ENCODE measurements at regions of chr15 and their contacts with region 1.

Region 1: DNA sequence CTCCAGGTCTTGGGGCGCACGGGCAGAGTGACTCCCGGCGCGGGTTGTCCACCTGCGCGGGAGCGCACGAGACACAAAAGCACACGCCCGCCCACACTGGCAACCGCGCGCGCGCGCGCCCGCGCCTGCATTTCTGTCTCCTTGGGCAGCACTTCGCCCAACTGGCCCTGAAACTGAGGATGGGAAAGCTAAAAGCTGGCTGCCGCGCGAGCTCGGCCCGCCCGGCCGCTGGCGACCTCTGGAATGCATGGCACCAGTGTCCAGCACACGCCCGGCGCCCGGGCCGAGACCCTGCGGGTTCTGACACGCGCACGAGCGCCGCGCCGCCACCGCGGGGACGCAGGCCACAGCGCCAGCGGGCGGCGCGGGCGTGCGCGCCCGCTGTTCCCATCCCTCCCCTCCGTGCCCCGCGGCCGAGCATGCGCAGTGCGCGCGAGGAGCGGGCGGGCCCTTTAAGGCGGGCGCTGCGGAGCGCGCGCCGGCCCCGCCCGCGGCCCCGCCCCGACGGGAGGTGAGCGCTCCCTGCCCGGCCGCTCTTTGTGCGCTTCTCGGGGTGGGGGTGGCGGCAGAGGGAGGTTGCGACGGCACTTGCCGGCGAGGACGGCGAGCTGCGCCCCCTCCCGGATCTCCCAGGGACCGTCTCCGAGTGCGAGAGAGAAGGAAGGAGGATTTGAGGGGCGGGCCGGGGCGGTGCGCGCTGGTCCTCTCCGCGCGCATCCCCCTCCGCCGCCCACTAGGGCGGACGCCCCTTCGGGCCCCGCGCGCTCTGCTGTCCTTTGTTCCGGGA is 1.0 kb upstream of the MEX3B start:
- DNase-seq: peak; percentile 85 to 93 (median 91)
- ATAC-seq: peak; percentile 86
- H3K4me3 ChIP-seq: peak overlapping the region; percentile 93
- H3K4me3 Mint-ChIP-seq: peak overlapping the region; percentile 88 to 94 (median 91)
- H3K27ac ChIP-seq: peak overlapping the region; percentile 72
- H3K27ac Mint-ChIP-seq: peak overlapping the region in 8 of 9 donors; percentile 31 to 93 (median 82)
- H3K4me1 ChIP-seq: peaks cover 0 to 8% of the 10 kb centered on the region in 2 donors
- H3K4me1 Mint-ChIP-seq: peaks cover 4 to 21% (median 11%) of the 10 kb centered on the region in 7 donors
- H3K27me3 ChIP-seq: no peaks in the 10 kb centered on the region
- H3K27me3 Mint-ChIP-seq: peaks cover 8 to 45% (median 11%) of the 10 kb centered on the region in 5 donors

Region 2: DNA sequence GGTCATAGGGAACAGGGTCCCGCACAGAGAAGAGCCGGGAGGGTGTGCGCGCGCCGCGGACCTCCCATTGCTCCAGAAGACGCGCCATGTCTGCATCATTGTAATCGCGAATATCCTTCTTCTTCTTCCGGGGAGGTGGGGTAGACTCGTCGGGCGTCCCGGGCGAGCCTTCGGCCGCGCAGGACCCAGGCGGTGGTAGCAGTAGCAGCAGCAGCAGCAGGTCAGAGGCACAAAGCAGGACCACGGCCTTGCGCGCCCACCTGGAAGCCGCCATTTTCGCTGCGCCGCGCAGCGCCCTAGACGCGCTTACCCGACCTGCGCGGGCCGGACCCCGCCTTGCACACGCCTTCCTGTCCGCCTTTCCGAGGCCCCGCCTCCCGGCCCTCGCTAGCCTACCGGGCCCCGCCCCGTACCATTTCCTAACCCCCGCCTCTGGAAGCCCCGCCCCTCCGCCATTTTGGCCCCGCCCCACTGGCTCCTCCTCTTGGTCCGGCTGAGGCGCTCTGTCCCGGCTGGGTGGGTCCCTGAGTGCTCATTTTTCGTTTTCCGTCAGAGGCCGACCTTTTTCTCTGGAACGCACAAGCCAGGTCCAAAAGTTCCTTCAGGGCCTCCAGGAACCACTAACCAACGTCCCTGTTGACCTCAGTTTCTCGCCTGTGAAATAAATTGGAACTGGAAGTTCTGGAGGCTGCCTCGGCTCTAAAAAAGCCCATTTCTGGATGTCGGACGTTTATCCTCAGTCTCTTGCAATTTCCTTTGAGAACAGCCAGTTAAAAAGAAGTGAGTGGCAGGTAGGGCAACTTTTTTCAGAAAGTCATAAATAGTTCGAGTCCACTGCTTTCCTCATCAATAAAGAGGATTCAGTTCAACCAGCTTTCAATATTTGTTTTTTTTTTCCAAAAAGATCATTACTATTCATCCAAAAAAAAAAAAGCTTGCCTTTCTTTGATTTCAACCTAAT is 1057.1 kb before region 1 on chr15 and contains the start of gene MESD:
- CTCF ChIA-PET with region 1: no interaction called
- POLR2A ChIA-PET with region 1: no interaction called
- intact Hi-C with region 1: loop called in 1 of 2 experiments (anchors 5 kb)
- DNase-seq: peak; percentile 89 to 97 (median 93)
- ATAC-seq: peak; percentile 99
- H3K4me3 ChIP-seq: peak within 1 kb of the TSS; percentile 95
- H3K4me3 Mint-ChIP-seq: peak within 1 kb of the TSS; percentile 95 to 100 (median 98)
- H3K27ac ChIP-seq: peak within 1 kb of the TSS; percentile 90
- H3K27ac Mint-ChIP-seq: peak within 1 kb of the TSS; percentile 92 to 99 (median 99)
- H3K4me1 ChIP-seq: peaks cover 28 to 45% of the 10 kb centered on the region in 2 donors
- H3K4me1 Mint-ChIP-seq: peaks cover 37 to 68% (median 64%) of the 10 kb centered on the region in 7 donors
- H3K27me3 ChIP-seq: no peaks in the 10 kb centered on the region
- H3K27me3 Mint-ChIP-seq: no peaks in the 10 kb centered on the region
- total RNA-seq, gene MESD: 17.1 to 42.5 (median 38.3) TPM

Region 3: GRCh38 chr15:81296673-81297072 is 750.2 kb before region 1 on chr15:
- CTCF ChIA-PET with region 1: no interaction called
- POLR2A ChIA-PET with region 1: no interaction called
- intact Hi-C with region 1: loop called (anchors 5 to 10 kb)
- DNase-seq: peak; percentile 38 to 87 (median 81)
- ATAC-seq: peak; percentile 69
- H3K4me3 ChIP-seq: peak overlapping the region; percentile 74
- H3K4me3 Mint-ChIP-seq: peak overlapping the region; percentile 80 to 100 (median 98)
- H3K27ac ChIP-seq: peak overlapping the region; percentile 87
- H3K27ac Mint-ChIP-seq: peak overlapping the region; percentile 93 to 100 (median 96)
- H3K4me1 ChIP-seq: peaks cover 52 to 59% of the 10 kb centered on the region in 2 donors
- H3K4me1 Mint-ChIP-seq: peaks cover 34 to 66% (median 64%) of the 10 kb centered on the region in 7 donors
- H3K27me3 ChIP-seq: no peaks in the 10 kb centered on the region
- H3K27me3 Mint-ChIP-seq: no peaks in the 10 kb centered on the region

Region 4: GRCh38 chr15:81410318-81410753 is 636.5 kb before region 1 on chr15:
- CTCF ChIA-PET with region 1: no interaction called
- POLR2A ChIA-PET with region 1: no interaction called
- intact Hi-C with region 1: loop called in 1 of 2 experiments (anchors 2 kb)
- DNase-seq: peak in 7 of 9 donors; percentile 37 to 77 (median 69)
- ATAC-seq: peak; percentile 80
- H3K4me3 ChIP-seq: no peak overlapping the region
- H3K4me3 Mint-ChIP-seq: peak overlapping the region in 1 of 10 donors; percentile 35
- H3K27ac ChIP-seq: no peak overlapping the region
- H3K27ac Mint-ChIP-seq: peak overlapping the region in 5 of 9 donors; percentile 13 to 86 (median 38)
- H3K4me1 ChIP-seq: peaks cover 0 to 4% of the 10 kb centered on the region in 2 donors
- H3K4me1 Mint-ChIP-seq: peaks cover 10 to 21% (median 17%) of the 10 kb centered on the region in 7 donors
- H3K27me3 ChIP-seq: peaks cover 0 to 3% of the 10 kb centered on the region in 2 donors
- H3K27me3 Mint-ChIP-seq: peaks cover 0 to 36% (median 7%) of the 10 kb centered on the region in 5 donors

Region 5: GRCh38 chr15:81548365-81549120 is 498.3 kb before region 1 on chr15:
- CTCF ChIA-PET with region 1: no interaction called
- POLR2A ChIA-PET with region 1: no interaction called
- intact Hi-C with region 1: no loop called
- DNase-seq: no peak
- ATAC-seq: no peak
- H3K4me3 ChIP-seq: no peak overlapping the region
- H3K4me3 Mint-ChIP-seq: no peak overlapping the region
- H3K27ac ChIP-seq: no peak overlapping the region
- H3K27ac Mint-ChIP-seq: no peak overlapping the region
- H3K4me1 ChIP-seq: no peaks in the 10 kb centered on the region
- H3K4me1 Mint-ChIP-seq: no peaks in the 10 kb centered on the region
- H3K27me3 ChIP-seq: peaks cover 0 to 5% of the 10 kb centered on the region in 2 donors
- H3K27me3 Mint-ChIP-seq: peaks cover 7 to 32% (median 17%) of the 10 kb centered on the region in 5 donors

Region 6: GRCh38 chr15:81589671-81590070 is 457.2 kb before region 1 on chr15:
- CTCF ChIA-PET with region 1: no interaction called
- POLR2A ChIA-PET with region 1: no interaction called
- intact Hi-C with region 1: no loop called
- DNase-seq: no peak
- ATAC-seq: no peak
- H3K4me3 ChIP-seq: no peak overlapping the region
- H3K4me3 Mint-ChIP-seq: no peak overlapping the region
- H3K27ac ChIP-seq: no peak overlapping the region
- H3K27ac Mint-ChIP-seq: no peak overlapping the region
- H3K4me1 ChIP-seq: no peaks in the 10 kb centered on the region
- H3K4me1 Mint-ChIP-seq: peaks cover 0 to 1% (median 0%) of the 10 kb centered on the region in 7 donors
- H3K27me3 ChIP-seq: no peaks in the 10 kb centered on the region
- H3K27me3 Mint-ChIP-seq: peaks cover 0 to 7% (median 6%) of the 10 kb centered on the region in 5 donors

Region 7: GRCh38 chr15:82262422-82263026 is 215.7 kb after region 1 on chr15 and contains the starts of genes EFL1 and SAXO2:
- CTCF ChIA-PET with region 1: no interaction called
- POLR2A ChIA-PET with region 1: no interaction called
- intact Hi-C with region 1: loop called in 1 of 2 experiments (anchors 5 kb)
- DNase-seq: peak; percentile 83 to 94 (median 88)
- ATAC-seq: peak; percentile 98
- H3K4me3 ChIP-seq: peak within 1 kb of the TSS; percentile 67
- H3K4me3 Mint-ChIP-seq: peak within 1 kb of the TSS; percentile 86 to 99 (median 96)
- H3K27ac ChIP-seq: peak within 1 kb of the TSS; percentile 57
- H3K27ac Mint-ChIP-seq: peak within 1 kb of the TSS; percentile 40 to 92 (median 89)
- H3K4me1 ChIP-seq: peaks cover 8 to 16% of the 10 kb centered on the region in 2 donors
- H3K4me1 Mint-ChIP-seq: peaks cover 22 to 53% (median 34%) of the 10 kb centered on the region in 7 donors
- H3K27me3 ChIP-seq: no peaks in the 10 kb centered on the region
- H3K27me3 Mint-ChIP-seq: peaks cover 0 to 3% (median 0%) of the 10 kb centered on the region in 5 donors
- total RNA-seq, gene EFL1: 9.9 to 27.5 (median 16.6) TPM
- total RNA-seq, gene SAXO2: 1.1 to 6.4 (median 2.5) TPM in 4 of 5 experiments, not detected in the other

Region 8: DNA sequence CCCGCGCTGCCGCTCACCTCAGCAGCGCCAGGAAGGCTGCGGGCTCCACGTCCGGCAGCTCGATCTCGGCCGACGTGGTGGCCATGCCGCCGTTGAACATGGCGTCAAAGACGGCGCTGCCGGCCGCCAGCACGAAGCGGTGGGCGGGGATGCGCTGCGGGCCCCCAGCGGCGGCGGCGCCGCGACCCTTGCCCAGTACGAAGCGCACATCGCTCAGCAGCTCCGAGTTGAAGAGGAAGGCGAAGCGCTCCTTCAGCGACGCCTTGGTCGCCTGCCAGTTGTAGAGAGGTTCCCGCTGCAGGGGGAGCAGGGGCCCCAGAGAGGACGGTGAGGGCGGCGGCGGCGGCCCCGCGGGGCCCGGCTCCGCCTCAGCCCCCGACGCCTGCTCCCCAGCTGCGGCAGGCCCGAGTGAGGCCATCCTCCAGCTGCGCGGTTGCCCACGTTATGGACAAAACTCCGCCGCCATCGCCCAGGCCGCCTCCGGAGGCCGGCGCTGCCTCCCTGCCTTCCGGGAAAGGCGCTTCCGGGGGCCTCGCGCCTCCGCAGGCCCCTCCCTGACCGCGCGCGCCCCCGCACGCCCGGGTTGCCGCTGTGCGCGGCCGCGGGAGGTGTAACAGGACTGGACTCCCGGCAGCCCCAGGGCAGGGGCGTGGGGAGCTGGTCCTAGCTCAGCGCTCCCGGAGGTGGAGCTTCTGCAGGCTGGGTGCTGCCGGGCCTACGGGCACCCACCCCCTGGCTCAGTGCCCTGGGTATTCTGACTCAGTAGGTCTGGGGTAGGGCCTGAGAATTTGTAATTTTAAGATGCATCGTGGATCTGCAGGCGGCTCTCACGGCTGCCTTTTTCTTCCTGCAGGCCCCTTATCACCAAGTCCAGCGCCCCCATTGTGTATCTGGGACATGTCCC is 1020.1 kb after region 1 on chr15 and contains the start of gene BTBD1:
- CTCF ChIA-PET with region 1: no interaction called
- POLR2A ChIA-PET with region 1: no interaction called
- intact Hi-C with region 1: loop called in 1 of 2 experiments (anchors 5 kb)
- DNase-seq: peak; percentile 67 to 93 (median 76)
- ATAC-seq: peak; percentile 88
- H3K4me3 ChIP-seq: peak within 1 kb of the TSS; percentile 87
- H3K4me3 Mint-ChIP-seq: peak within 1 kb of the TSS in 7 of 10 donors; percentile 67 to 89 (median 83)
- H3K27ac ChIP-seq: peak within 1 kb of the TSS; percentile 84
- H3K27ac Mint-ChIP-seq: peak within 1 kb of the TSS; percentile 60 to 91 (median 87)
- H3K4me1 ChIP-seq: peaks cover 32 to 35% of the 10 kb centered on the region in 2 donors
- H3K4me1 Mint-ChIP-seq: peaks cover 8 to 18% (median 11%) of the 10 kb centered on the region in 7 donors
- H3K27me3 ChIP-seq: no peaks in the 10 kb centered on the region
- H3K27me3 Mint-ChIP-seq: peaks cover 0 to 1% (median 0%) of the 10 kb centered on the region in 5 donors
- total RNA-seq, gene BTBD1: 35.0 to 57.6 (median 36.4) TPM